ENCODE measurements at regions of chr13 and their contacts with region 1.

Region 1: DNA sequence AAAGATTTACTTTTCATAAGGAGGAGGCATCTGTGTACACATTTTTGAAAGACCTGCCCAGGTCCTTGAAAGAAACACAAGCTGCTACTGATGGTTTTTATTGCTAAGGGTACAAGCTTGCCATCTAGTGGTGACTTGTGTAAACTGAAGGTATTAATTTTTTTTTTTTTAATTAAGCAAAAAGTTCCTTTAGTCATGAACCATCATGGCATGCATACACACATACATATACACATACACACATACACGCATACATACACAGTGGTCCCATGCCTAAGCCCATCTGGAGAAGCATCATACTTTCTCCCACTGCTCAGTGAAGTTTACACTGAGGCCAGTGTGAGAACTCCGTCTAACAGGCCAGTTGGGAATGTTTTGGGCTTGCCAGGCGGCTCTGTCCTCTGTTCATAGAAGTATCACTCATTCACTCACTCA is 312.5 kb downstream of the DCLK1 start:
- H3K4me3 ChIP-seq: no peak overlapping the region
- H3K27ac ChIP-seq: no peak overlapping the region
- H3K4me1 ChIP-seq: no peaks in the 10 kb centered on the region
- CTCF ChIP-seq: no peak

Region 2: DNA sequence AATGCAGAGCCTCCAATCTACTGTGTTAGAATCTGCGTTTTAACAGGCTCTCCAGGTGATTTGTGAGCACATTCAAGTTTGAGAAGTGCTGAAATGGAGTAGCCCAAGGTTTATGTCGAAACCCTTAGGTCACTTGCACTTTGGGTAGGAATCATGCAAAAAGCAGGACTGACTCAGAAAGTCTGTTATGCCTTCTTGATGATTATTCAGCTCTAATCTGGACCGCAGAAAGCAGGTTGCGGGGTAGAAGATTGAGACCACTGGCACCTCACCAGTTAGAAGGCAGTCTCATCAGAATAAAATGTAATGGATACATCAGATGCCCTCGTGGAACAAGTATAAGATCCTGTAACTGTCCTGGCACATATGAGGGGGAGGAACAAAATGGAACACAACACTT is 13.7 kb before region 1 on chr13:
- CTCF ChIA-PET with region 1: interaction called, 12 read pairs
- POLR2A ChIA-PET with region 1: no interaction called
- H3K4me3 ChIP-seq: no peak overlapping the region
- H3K27ac ChIP-seq: no peak overlapping the region
- H3K4me1 ChIP-seq: no peaks in the 10 kb centered on the region
- CTCF ChIP-seq: no peak

Region 3: GRCh38 chr13:35830850-35831450 is 12.3 kb after region 1 on chr13:
- CTCF ChIA-PET with region 1: interaction called, 18 read pairs
- POLR2A ChIA-PET with region 1: no interaction called
- H3K4me3 ChIP-seq: no peak overlapping the region
- H3K27ac ChIP-seq: no peak overlapping the region
- H3K4me1 ChIP-seq: no peaks in the 10 kb centered on the region
- CTCF ChIP-seq: no peak